CD8-positive, alpha-beta T cell (primary cell): ENCODE measurements at regions of chr17 and their contacts with region 1.

Region 1: GRCh38 chr17:3796110-3796821 is 4.7 kb downstream of the ITGAE start:
- DNase-seq: peak; percentile 74 to 96 (median 85)
- ATAC-seq: peak; percentile 67
- H3K4me3 ChIP-seq: no peak overlapping the region
- H3K4me3 Mint-ChIP-seq: peak overlapping the region; percentile 9
- H3K27ac ChIP-seq: peak overlapping the region; percentile 29 to 36
- H3K27ac Mint-ChIP-seq: peak overlapping the region; percentile 97
- H3K4me1 ChIP-seq: peaks cover 23% of the 10 kb centered on the region
- H3K4me1 Mint-ChIP-seq: peaks cover 52% of the 10 kb centered on the region
- H3K27me3 ChIP-seq: no peaks in the 10 kb centered on the region
- H3K27me3 Mint-ChIP-seq: no peaks in the 10 kb centered on the region
- CTCF ChIP-seq: no peak

Region 2: GRCh38 chr17:3378321-3378720 is 417.9 kb before region 1 on chr17:
- CTCF ChIA-PET with region 1: no interaction called
- POLR2A ChIA-PET with region 1: no interaction called
- intact Hi-C with region 1: no loop called
- DNase-seq: no peak
- ATAC-seq: no peak
- H3K4me3 ChIP-seq: no peak overlapping the region
- H3K4me3 Mint-ChIP-seq: no peak overlapping the region
- H3K27ac ChIP-seq: no peak overlapping the region
- H3K27ac Mint-ChIP-seq: no peak overlapping the region
- H3K4me1 ChIP-seq: no peaks in the 10 kb centered on the region
- H3K4me1 Mint-ChIP-seq: no peaks in the 10 kb centered on the region
- H3K27me3 ChIP-seq: no peaks in the 10 kb centered on the region
- H3K27me3 Mint-ChIP-seq: peaks cover 33% of the 10 kb centered on the region
- CTCF ChIP-seq: no peak

Region 3: DNA sequence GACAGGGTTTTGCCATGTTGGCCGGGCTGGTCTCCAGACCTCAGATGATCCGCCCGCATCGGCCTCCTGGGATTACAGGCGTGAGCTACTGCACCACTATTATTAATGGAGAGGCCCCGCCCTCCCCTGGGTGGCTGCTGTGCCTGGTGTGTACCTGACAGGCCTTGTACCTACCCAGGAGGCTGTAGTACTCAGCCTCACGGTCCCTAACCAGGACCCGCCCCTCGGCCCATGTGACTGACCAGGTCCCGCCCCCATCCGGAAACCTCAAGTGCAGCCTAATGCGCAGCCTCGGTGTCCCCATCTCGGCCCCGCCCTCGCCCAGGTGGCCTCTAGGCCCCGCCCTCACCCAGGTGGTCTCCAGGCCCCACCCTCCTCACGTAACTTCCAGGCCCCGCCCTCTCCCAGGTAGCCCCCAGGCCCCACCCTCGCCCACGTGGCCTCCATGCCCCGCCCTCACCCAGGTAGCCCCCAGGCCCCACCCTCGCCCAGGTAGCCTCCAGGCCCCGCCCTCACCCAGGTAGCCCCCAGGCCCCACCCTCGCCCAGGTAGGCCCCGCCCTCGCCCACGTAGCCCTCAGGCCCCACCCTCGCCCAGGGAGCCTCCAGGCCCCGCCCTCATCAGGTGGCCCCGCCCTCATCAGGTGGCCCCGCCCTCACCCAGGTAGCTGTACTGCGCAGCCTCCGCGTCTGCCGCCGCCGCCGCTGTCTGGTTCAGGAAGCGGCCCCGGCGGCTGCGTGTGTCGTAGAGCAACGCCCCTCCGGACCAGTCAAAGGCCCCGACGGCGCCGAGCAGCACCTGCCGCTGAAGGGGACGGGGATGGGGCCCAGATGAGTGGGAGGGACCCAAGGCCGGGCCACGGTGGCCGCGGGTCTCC is 41.6 kb before region 1 on chr17:
- CTCF ChIA-PET with region 1: no interaction called
- POLR2A ChIA-PET with region 1: interaction called, 6 read pairs
- intact Hi-C with region 1: loop called in 1 of 2 experiments (anchors 5 kb)
- DNase-seq: peak; percentile 69 to 89 (median 82)
- ATAC-seq: peak; percentile 96
- H3K4me3 ChIP-seq: peak overlapping the region; percentile 23 to 53
- H3K4me3 Mint-ChIP-seq: peak overlapping the region; percentile 56
- H3K27ac ChIP-seq: peak overlapping the region; percentile 45 to 73
- H3K27ac Mint-ChIP-seq: peak overlapping the region; percentile 90
- H3K4me1 ChIP-seq: peaks cover 36% of the 10 kb centered on the region
- H3K4me1 Mint-ChIP-seq: peaks cover 39% of the 10 kb centered on the region
- H3K27me3 ChIP-seq: no peaks in the 10 kb centered on the region
- H3K27me3 Mint-ChIP-seq: no peaks in the 10 kb centered on the region
- CTCF ChIP-seq: no peak

Region 4: DNA sequence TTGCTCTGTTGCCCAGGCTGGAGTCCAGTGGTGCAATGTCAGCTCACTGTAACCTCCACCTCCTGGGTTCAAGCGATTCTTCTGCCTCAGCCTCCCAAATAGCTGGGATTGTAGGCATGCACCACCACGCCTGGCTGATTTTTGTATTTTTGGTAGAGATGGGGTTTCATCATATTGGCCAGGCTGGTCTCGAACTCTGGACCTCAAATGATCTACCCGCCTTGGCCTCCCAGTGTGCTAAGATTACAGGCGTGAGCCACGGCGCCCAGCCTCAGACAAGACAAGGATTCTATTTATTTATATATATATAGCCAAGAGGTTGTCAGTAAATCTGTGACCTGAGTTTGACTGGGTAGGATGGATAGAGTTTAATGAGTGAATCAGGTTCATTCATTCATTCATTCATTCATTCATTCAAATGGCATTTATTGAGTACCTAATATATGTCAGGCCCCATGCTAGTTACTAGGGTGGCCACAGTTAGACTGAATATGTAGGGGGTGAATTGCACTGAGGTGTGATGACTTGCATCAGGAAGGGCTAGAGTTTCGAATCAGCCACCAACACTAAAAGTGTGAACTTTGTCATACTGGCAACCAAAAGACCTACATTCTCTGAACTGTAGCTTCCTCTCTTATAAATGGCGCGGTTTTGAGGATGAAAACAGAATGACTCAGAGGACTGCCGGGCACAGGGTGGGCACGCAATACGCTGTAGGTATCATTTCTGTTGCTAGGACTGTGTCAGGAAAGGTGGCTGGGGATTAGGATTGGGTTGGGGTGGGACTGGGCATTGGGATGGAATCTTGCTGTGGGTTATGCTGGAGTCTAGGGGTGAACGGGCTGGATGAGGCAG is 33.1 kb before region 1 on chr17:
- CTCF ChIA-PET with region 1: no interaction called
- POLR2A ChIA-PET with region 1: interaction called, 17 read pairs
- intact Hi-C with region 1: loop called (anchors 1 to 2 kb)
- DNase-seq: peak in 4 of 9 experiments; percentile 44 to 88 (median 75)
- ATAC-seq: peak; percentile 30
- H3K4me3 ChIP-seq: peak overlapping the region; percentile 16 to 45
- H3K4me3 Mint-ChIP-seq: peak overlapping the region; percentile 82
- H3K27ac ChIP-seq: peak overlapping the region; percentile 42 to 70
- H3K27ac Mint-ChIP-seq: peak overlapping the region; percentile 97
- H3K4me1 ChIP-seq: peaks cover 52% of the 10 kb centered on the region
- H3K4me1 Mint-ChIP-seq: peaks cover 50% of the 10 kb centered on the region
- H3K27me3 ChIP-seq: no peaks in the 10 kb centered on the region
- H3K27me3 Mint-ChIP-seq: no peaks in the 10 kb centered on the region
- CTCF ChIP-seq: no peak